Activated CD8-positive, alpha-beta T cell treated with anti-CD3 and anti-CD28 coated beads, Interleukin-2, amount 10 ng/mL, durations not matched to agents 7 days and 5 days (primary cell): ENCODE measurements at regions of chr9 and their contacts with region 1.

Region 1: GRCh38 chr9:84781458-84781857 is 111.9 kb downstream of the NTRK2 start:
- DNase-seq: peak; percentile 28
- ATAC-seq: no peak
- H3K4me3 Mint-ChIP-seq: no peak overlapping the region
- H3K27ac Mint-ChIP-seq: no peak overlapping the region
- H3K4me1 Mint-ChIP-seq: no peaks in the 10 kb centered on the region
- H3K27me3 Mint-ChIP-seq: no peaks in the 10 kb centered on the region

Region 2: GRCh38 chr9:84397151-84397728 is 384.2 kb before region 1 on chr9:
- CTCF ChIA-PET with region 1: interaction called, 15 read pairs
- POLR2A ChIA-PET with region 1: no interaction called
- DNase-seq: peak; percentile 73
- ATAC-seq: peak; percentile 82
- H3K4me3 Mint-ChIP-seq: no peak overlapping the region
- H3K27ac Mint-ChIP-seq: no peak overlapping the region
- H3K4me1 Mint-ChIP-seq: no peaks in the 10 kb centered on the region
- H3K27me3 Mint-ChIP-seq: no peaks in the 10 kb centered on the region